Left cardiac atrium (tissue), 4 donors: ENCODE measurements at regions of chr7 and their contacts with region 1.

Region 1: GRCh38 chr7:27662490-27663205 is at the start of gene HIBADH:
- DNase-seq: peak; percentile 99
- ATAC-seq: peak; percentile 99
- total RNA-seq, gene HIBADH: 52.4 to 68.1 TPM

Region 2: GRCh38 chr7:27739909-27740448 is 77.3 kb after region 1 on chr7 and contains the start of gene TAX1BP1:
- intact Hi-C with region 1: loop called (anchors 5 to 10 kb)
- DNase-seq: peak; percentile 96
- ATAC-seq: peak; percentile 99 to 100
- total RNA-seq, gene TAX1BP1: 119 to 133 TPM

Region 3: DNA sequence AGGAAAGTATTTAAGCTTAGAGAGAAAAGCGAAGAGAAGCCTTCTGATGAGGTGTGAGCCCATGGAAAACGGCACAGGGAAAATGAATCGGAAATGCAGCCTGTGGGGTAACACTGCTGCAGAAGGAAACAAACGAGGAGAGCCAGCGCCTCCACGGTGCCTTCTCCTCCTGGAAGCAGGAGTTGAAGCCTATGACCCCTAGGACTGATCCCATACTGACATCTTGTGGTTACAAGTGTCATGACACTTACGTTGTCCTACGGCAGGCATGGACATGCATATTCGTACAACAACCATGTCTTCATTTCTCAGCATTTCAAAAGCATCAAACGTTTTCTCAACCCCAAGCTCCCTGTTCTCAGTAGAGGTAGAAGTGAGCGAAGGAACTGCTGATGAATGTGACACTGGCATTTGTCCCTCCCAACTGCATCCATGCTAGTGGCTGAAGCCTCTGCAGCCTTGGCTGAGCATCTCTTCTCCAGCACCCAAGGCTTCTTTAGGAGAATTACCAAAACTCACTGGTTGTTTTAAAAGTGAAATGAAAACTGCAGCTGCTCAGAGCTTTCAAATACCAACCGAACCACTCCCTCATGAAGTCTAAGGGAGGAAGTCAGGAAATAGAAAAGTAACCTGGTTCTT is 357.8 kb after region 1 on chr7:
- intact Hi-C with region 1: loop called in 1 of 2 experiments (anchors 10 kb)
- DNase-seq: peak; percentile 58
- ATAC-seq: peak; percentile 79 to 85